ENCODE measurements at regions of chr16 and their contacts with region 1.

Region 1: GRCh38 chr16:4957720-4958509 is at the start of gene SEC14L5:
- DNase-seq: peak; percentile 100
- ATAC-seq: peak; percentile 95
- H3K4me3 Mint-ChIP-seq: peak within 1 kb of the TSS; percentile 89
- H3K27ac Mint-ChIP-seq: peak within 1 kb of the TSS; percentile 87
- H3K4me1 Mint-ChIP-seq: peaks cover 20% of the 10 kb centered on the region
- H3K27me3 Mint-ChIP-seq: peaks cover 13% of the 10 kb centered on the region
- CTCF ChIP-seq: no peak
- total RNA-seq, gene SEC14L5: 2.1 to 2.4 TPM (median 2.3 TPM) in 3 replicates

Region 2: DNA sequence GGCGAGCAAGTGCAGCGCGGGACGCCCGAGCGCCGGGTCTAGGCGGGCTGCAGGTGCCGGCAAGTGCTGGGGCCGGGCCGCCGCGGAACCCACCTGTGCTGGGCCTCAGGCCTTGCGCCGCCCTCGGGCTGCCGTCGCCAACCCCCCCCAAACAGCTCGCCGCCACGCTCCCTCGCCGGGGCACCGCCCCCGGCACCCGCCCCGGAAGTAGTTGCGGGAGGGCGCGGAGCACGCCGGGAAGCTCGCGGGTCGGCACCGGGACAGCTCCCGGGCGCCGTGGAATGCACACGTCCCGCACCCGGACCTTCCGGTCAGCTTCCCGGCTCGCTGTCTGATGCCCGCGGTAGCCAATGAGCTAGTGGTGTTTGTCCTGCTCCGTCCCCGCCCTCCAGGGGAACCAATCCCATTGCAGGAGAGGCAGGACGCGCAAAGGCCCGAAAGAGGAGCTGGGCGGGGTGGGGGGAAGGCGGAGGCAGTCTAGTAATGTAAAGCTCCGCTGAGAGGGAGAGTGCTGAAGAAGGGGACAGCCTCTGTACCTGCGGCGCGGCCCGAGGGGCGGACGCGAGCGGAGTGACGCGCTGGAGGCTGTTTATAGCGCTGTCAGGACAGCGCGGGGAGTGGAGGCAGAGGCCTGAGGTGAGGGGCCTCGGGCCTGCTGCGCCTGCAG is 223.7 kb before region 1 on chr16 and contains the starts of genes ANKS3 and DNAAF8:
- CTCF ChIA-PET with region 1: interaction called, 26 read pairs
- POLR2A ChIA-PET with region 1: interaction called, 5 read pairs
- DNase-seq: peak; percentile 95
- ATAC-seq: peak; percentile 94
- H3K4me3 Mint-ChIP-seq: peak within 1 kb of the TSS; percentile 93
- H3K27ac Mint-ChIP-seq: peak within 1 kb of the TSS; percentile 97
- H3K4me1 Mint-ChIP-seq: peaks cover 9% of the 10 kb centered on the region
- H3K27me3 Mint-ChIP-seq: peaks cover 4% of the 10 kb centered on the region; the same call in 1 of the 2 replicates
- CTCF ChIP-seq: no peak
- total RNA-seq, gene ANKS3: 28.6 to 35.6 TPM (median 31.5 TPM) in 3 replicates
- total RNA-seq, gene DNAAF8: 0.09 to 0.41 TPM (median 0.14 TPM) in 3 replicates

Region 3: GRCh38 chr16:4882633-4883285 is 75.2 kb before region 1 on chr16:
- CTCF ChIA-PET with region 1: interaction called, 12 read pairs
- POLR2A ChIA-PET with region 1: no interaction called
- DNase-seq: no peak
- ATAC-seq: no peak
- H3K4me3 Mint-ChIP-seq: no peak overlapping the region
- H3K27ac Mint-ChIP-seq: no peak overlapping the region; the same call in 1 of the 2 replicates
- H3K4me1 Mint-ChIP-seq: no peaks in the 10 kb centered on the region
- H3K27me3 Mint-ChIP-seq: no peaks in the 10 kb centered on the region
- CTCF ChIP-seq: no peak

Region 4: DNA sequence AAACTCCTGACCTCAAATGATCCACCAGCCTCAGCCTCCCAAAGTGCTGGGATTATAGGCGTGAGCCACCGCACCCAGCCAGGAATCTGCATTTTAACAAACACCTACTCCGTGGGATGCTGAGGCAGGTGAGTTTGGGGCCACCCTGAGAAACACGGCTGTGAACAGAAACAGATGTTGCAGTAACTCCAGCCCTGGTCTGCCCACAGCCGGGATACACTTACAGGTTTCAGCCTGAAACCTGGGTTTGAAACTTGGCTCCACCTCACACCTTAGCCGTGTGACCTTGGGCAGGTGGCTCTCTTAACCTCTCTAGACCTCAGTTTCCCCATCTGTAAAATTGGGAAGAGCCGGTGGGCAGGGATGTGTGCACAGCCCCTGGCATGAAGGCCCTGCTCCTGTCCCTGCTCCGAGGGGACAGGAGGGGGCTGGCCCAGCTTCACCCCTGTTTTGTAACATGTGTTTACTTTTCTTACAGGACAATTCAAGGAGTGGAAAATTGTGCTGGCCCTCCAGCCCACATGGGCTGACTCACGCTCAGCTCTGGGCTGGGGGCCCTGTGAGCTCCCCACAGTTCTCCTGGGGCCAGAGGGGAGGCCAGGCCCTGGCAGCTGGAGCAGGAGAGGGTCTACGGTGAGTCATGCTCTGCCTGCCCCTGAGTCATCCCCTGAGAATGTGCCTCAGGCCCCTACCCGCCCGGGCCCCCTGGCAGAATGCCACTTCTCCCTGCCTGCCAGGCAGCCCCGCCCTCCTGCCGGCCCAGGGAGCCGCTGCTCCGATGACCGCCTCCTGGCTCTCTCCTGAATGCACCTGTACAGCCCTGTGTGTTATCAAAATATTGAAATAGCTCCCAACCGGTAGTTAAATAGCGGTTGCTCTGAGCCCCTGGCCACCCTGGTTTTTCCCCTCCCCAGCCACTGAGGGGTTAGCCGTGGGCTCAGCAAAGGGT is 13.3 kb before region 1 on chr16:
- CTCF ChIA-PET with region 1: interaction called, 27 read pairs
- POLR2A ChIA-PET with region 1: interaction called, 4 read pairs
- DNase-seq: peak; percentile 42
- ATAC-seq: peak; percentile 20
- H3K4me3 Mint-ChIP-seq: no peak overlapping the region
- H3K27ac Mint-ChIP-seq: peak overlapping the region; percentile 89
- H3K4me1 Mint-ChIP-seq: peaks cover 51% of the 10 kb centered on the region
- H3K27me3 Mint-ChIP-seq: no peaks in the 10 kb centered on the region
- CTCF ChIP-seq: no peak

Region 5: DNA sequence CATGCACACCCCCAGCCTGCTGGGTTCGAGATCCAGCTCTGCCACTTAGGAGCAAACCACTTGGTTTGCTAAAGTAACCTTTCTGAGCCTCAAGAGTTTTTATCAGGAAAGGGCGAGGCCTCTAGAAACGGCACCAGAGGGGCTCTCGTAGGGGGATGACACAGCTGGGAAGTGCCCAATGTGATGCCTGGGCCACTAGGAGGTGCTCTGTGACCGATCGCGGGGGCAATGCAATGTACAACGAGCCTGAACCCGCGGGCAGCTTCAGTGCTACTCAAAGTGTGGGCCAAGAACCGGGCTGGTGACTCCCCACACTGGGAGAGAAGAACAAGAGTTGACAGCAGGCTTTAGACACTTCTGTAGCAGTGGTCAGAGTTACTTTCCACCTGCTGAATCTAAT is 98.4 kb after region 1 on chr16:
- CTCF ChIA-PET with region 1: interaction called, 17 read pairs
- POLR2A ChIA-PET with region 1: no interaction called
- DNase-seq: peak; percentile 80
- ATAC-seq: peak; percentile 76
- H3K4me3 Mint-ChIP-seq: no peak overlapping the region
- H3K27ac Mint-ChIP-seq: no peak overlapping the region
- H3K4me1 Mint-ChIP-seq: peaks cover 20% of the 10 kb centered on the region
- H3K27me3 Mint-ChIP-seq: peaks cover 2% of the 10 kb centered on the region; the same call in 1 of the 2 replicates
- CTCF ChIP-seq: peak; percentile 66

Measured in WTC11 (cell line).